ENCODE measurements at regions of chr7 and their contacts with region 1.

Region 1: DNA sequence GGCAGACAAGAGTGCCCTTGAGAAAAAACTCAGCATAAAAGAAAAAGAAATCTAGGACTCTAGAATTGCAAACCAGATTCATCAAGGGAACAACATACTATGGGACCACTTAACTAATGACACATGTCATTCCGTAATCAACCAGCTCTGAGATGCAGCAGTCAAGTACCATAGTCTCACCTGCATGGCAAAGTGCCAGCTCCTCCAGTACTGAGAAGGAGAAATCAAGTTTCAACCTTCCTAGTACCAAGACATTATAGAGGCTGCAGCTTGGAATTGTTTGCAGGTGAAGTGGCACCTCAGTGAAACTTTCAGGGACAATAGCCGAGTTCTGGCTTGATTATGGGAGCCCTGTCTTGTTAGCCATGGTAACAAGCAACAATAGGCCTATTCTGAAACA is 11.5 kb downstream of the STEAP1 start:
- DNase-seq: no peak
- ATAC-seq: no peak

Region 2: GRCh38 chr7:90006998-90007654 is 158.6 kb before region 1 on chr7:
- intact Hi-C with region 1: no loop called
- DNase-seq: no peak
- ATAC-seq: no peak

Region 3: GRCh38 chr7:90271753-90272152 is 106.0 kb after region 1 on chr7:
- intact Hi-C with region 1: no loop called
- DNase-seq: no peak
- ATAC-seq: no peak

Region 4: DNA sequence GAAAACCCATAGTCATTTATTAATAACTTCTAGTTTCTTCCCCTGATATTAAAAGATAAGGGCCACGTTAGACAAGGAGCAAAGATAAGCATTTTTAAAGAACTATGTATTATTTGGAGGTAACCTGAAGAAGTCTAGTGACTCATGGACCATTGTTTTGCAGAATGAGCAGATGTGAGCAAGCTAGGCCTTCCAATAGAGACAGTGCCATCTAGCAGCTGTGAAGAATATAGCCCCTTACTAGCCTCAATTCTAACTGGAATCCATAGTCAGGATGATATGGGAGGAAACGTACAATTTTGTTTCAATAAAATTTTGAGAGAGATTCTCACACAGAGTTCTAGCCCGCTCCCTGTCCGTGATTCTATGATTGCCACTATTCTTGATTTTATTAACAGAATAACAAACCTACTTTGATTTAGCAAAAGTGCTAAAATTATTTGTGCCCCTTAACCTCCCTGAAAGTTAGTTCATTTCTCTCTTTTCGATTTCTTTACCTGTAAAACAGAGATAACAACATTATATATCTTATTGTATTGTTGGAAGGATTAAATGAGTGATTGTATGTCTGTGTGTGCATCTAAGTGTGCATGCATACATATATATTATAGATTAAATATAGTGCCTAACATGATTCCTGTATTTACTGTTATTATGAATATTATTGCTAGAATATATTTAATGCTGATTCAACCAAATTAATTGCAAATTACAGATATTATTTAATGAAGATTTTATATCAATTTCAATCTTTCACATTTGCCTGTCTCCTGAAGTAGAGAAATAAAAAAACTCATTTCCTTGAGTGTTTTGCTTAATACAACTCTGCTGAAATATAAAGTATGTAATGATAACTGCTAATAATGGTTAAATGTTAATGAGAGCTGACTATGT is 132.7 kb after region 1 on chr7:
- intact Hi-C with region 1: no loop called
- DNase-seq: no peak
- ATAC-seq: peak; percentile 78 to 86

Region 5: DNA sequence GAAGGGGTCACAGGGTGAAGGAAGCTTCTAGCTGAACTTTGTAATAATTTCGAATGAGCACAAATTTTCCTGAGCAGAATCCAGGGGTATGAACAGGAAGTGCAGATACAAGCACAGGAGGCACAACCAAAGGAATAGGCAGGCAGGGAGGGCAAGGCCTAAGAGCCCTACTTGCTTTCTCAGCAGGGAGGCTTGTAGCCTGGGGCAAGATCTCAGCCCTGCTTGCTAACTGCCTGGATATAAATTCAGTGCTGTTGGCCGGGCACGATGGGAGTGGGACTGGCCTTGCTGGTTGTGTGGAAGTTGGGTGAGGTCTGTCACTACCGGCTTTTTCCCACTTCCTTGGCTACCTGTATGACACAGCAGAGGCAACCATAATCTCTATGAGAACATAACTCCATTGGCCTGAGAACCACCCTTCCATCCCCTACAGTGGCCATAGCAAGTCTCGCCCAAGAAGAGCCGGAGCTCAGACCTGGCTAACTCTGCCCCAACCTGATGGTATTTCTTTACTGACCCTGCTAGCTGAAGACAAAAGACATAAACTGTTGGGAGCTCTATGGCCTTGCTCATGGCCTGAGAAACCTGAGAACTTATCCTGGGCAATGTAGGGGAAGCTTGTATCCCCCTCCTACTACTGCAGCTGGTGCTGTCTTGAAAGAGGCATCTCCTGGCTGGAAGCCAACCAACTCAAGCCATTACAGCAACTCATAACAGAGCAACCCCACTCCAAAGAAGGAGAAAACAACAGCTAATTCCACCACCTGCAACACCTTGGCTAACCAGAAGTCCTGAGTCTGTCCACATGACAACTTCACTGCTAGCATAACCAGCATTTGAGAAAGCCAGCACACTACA is 265.1 kb after region 1 on chr7:
- intact Hi-C with region 1: loop called in 1 of 2 experiments (anchors 10 kb)
- DNase-seq: no peak
- ATAC-seq: no peak

Measured in left cardiac atrium (tissue), 4 donors.